PC-9 (cell line): ENCODE measurements at regions of chr11 and their contacts with region 1.

Region 1: GRCh38 chr11:130131961-130132850 is 27.4 kb upstream of the ST14 start:
- DNase-seq: peak; percentile 51 to 68
- H3K4me3 ChIP-seq: no peak overlapping the region
- H3K27ac ChIP-seq: peak overlapping the region; percentile 15; the same call in 1 of the 2 replicates
- H3K4me1 ChIP-seq: no peaks in the 10 kb centered on the region
- H3K27me3 ChIP-seq: no peaks in the 10 kb centered on the region
- CTCF ChIP-seq: peak; percentile 91

Region 2: GRCh38 chr11:128757886-128758612 is 1374.2 kb before region 1 on chr11:
- CTCF ChIA-PET with region 1: no interaction called
- POLR2A ChIA-PET with region 1: no interaction called
- intact Hi-C with region 1: no loop called
- DNase-seq: no peak
- H3K4me3 ChIP-seq: no peak overlapping the region
- H3K27ac ChIP-seq: no peak overlapping the region
- H3K4me1 ChIP-seq: no peaks in the 10 kb centered on the region
- H3K27me3 ChIP-seq: peaks cover 7% of the 10 kb centered on the region; the same call in 1 of the 2 replicates
- CTCF ChIP-seq: no peak

Region 3: GRCh38 chr11:129410395-129410960 is 721.7 kb before region 1 on chr11:
- CTCF ChIA-PET with region 1: no interaction called
- POLR2A ChIA-PET with region 1: no interaction called
- intact Hi-C with region 1: no loop called
- DNase-seq: no peak
- H3K4me3 ChIP-seq: no peak overlapping the region
- H3K27ac ChIP-seq: no peak overlapping the region
- H3K4me1 ChIP-seq: peaks cover 6% of the 10 kb centered on the region; the same call in 1 of the 2 replicates
- H3K27me3 ChIP-seq: no peaks in the 10 kb centered on the region
- CTCF ChIP-seq: no peak

Region 4: GRCh38 chr11:129785383-129786111 is 346.7 kb before region 1 on chr11:
- CTCF ChIA-PET with region 1: no interaction called
- POLR2A ChIA-PET with region 1: no interaction called
- intact Hi-C with region 1: loop called (anchors 5 kb)
- DNase-seq: peak in 1 of 2 experiments; percentile 61
- H3K4me3 ChIP-seq: no peak overlapping the region
- H3K27ac ChIP-seq: no peak overlapping the region
- H3K4me1 ChIP-seq: peaks cover 18% of the 10 kb centered on the region
- H3K27me3 ChIP-seq: no peaks in the 10 kb centered on the region
- CTCF ChIP-seq: peak; percentile 73

Region 5: DNA sequence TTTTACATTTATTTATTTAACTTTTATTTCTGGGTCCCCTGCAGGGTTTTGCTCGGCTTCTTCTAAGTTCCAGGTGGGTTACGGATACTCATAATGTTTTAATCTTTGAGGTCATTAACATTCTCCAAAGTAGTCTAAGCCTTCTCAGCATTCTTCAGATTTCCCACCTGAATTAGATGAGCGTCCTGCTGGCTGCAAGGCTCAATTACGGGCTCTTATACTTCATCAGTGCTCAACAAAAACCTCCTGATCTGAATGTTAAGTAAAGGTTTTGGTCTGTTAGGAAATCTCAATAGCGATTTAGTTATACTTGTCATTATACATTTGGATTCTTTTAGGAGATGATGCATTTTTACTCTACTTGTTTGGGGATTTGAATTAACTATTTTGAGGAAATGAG is 209.5 kb before region 1 on chr11:
- CTCF ChIA-PET with region 1: interaction called, 27 read pairs
- POLR2A ChIA-PET with region 1: interaction called, 14 read pairs
- intact Hi-C with region 1: loop called (anchors 1 kb)
- DNase-seq: no peak
- H3K4me3 ChIP-seq: no peak overlapping the region
- H3K27ac ChIP-seq: no peak overlapping the region
- H3K4me1 ChIP-seq: no peaks in the 10 kb centered on the region
- H3K27me3 ChIP-seq: no peaks in the 10 kb centered on the region
- CTCF ChIP-seq: no peak

Region 6: DNA sequence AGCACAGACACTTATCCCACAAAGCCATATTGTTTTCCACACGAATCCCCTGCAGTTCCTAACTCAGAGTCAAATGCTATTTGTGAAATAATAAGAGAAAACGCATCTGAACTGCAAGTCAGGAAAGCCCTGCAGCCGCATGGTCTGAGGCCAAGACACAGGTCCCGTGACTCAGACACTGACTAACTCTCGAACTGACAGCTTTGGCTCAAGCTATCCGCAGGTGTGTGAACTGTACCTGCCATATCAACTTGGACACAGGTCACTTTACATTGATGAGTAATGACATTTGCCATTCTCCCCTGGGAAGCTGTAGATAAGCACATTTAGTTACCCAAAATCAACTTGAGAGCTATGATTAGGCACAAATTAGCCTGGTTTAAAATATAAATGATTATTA is 201.9 kb before region 1 on chr11:
- CTCF ChIA-PET with region 1: interaction called, 8 read pairs
- POLR2A ChIA-PET with region 1: interaction called, 14 read pairs
- intact Hi-C with region 1: no loop called
- DNase-seq: peak; percentile 34 to 89
- H3K4me3 ChIP-seq: no peak overlapping the region
- H3K27ac ChIP-seq: peak overlapping the region; percentile 41
- H3K4me1 ChIP-seq: peaks cover 21% of the 10 kb centered on the region
- H3K27me3 ChIP-seq: no peaks in the 10 kb centered on the region
- CTCF ChIP-seq: no peak

Region 7: DNA sequence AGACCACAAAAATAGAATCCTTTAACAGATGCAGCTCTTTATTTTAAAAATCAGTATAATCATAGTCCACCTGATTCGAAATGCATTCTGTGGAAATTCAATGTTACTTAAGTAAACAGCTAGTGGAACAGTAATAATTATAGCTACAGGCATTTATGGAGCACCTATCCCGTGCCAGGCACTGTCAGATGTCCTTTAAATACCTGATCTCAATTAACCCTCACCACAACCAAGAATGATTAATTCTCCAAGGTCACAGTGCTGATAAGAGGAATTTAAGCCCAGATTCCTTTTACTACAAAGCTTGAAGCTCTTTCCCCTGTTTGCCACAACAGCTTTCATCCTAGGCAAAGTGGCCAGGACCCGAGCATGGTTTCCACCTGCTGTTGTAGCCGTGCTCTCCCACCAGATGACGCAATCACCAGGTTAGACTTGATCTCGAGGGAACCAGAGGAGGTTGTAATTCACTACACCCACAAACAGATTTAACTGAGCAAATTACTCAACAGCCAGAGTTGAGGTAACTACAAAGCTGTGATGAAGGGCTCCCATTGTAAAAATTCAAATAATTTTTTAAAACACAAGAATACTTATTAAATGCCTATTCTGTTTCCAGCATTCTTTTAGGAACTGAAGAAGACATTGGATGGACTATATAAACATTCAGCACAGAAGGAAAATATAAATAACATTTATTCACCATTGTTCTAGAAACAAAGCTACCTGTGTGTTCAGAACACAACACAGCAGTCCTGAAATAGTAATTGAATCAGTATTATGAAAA is 139.9 kb before region 1 on chr11:
- CTCF ChIA-PET with region 1: interaction called, 11 read pairs
- POLR2A ChIA-PET with region 1: no interaction called
- intact Hi-C with region 1: no loop called
- DNase-seq: peak; percentile 5 to 74
- H3K4me3 ChIP-seq: no peak overlapping the region
- H3K27ac ChIP-seq: peak overlapping the region; percentile 45
- H3K4me1 ChIP-seq: peaks cover 16% of the 10 kb centered on the region
- H3K27me3 ChIP-seq: no peaks in the 10 kb centered on the region
- CTCF ChIP-seq: no peak